ENCODE measurements at regions of chr11 and their contacts with region 1.

Region 1: DNA sequence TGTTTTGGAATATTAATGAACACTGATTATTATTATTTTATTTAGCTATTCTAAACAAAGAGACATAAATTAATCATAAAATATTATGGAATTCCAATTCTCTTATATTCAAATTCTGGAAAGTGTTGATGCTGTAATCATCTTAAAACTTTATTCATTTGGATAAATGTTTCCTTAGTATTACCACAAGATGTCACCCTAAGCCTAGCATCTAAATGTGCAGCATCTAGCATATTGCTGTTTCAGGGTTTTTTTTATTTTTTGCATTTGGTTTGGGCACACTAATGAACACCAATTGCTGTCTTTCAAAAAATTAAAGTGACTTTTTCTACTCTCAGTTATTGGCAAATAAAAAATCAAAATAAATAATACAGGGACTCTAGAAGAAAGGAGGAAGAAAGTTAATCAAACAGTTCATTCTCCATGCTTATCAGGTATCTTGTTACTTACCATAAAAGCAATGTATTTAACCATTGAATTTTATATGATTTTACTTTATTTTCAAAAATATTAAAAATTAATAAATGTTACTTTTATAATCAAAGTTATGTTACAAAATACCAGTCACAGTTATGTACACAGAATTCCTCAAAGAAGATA is 31.8 kb downstream of the DLG2 start:
- DNase-seq: peak; percentile 54
- ATAC-seq: no peak
- H3K4me3 ChIP-seq: no peak overlapping the region
- H3K4me3 Mint-ChIP-seq: no peak overlapping the region
- H3K27ac ChIP-seq: no peak overlapping the region
- H3K27ac Mint-ChIP-seq: no peak overlapping the region
- H3K4me1 ChIP-seq: no peaks in the 10 kb centered on the region
- H3K4me1 Mint-ChIP-seq: no peaks in the 10 kb centered on the region
- H3K27me3 ChIP-seq: no peaks in the 10 kb centered on the region
- H3K27me3 Mint-ChIP-seq: no peaks in the 10 kb centered on the region
- CTCF ChIP-seq: peak; percentile 78

Region 2: DNA sequence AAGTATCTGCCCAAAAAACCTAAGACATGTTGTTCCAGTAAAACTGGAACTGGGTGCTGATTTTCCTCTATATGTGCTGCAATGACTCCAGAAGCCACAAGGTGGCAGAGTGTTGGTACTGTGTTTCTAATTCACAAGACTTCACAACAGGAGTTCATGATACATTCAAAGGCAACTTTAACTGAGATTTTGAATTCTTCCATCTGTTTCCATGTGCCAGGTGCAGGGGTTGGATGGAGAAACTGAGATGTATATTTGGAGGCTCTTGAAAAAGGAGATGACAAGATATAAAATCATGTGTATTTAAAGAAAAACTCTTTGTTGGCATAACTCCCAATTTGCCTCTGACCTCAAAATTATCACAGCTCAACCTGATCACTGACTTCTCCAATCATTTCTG is 1210.7 kb before region 1 on chr11:
- CTCF ChIA-PET with region 1: interaction called, 8 read pairs
- POLR2A ChIA-PET with region 1: no interaction called
- intact Hi-C with region 1: loop called (anchors 2 kb)
- DNase-seq: peak; percentile 43
- ATAC-seq: peak; percentile 61
- H3K4me3 ChIP-seq: no peak overlapping the region
- H3K4me3 Mint-ChIP-seq: no peak overlapping the region
- H3K27ac ChIP-seq: no peak overlapping the region
- H3K27ac Mint-ChIP-seq: no peak overlapping the region
- H3K4me1 ChIP-seq: no peaks in the 10 kb centered on the region
- H3K4me1 Mint-ChIP-seq: no peaks in the 10 kb centered on the region
- H3K27me3 ChIP-seq: no peaks in the 10 kb centered on the region
- H3K27me3 Mint-ChIP-seq: peaks cover 3% of the 10 kb centered on the region
- CTCF ChIP-seq: peak; percentile 95

Region 3: GRCh38 chr11:84780689-84781293 is 814.6 kb before region 1 on chr11:
- CTCF ChIA-PET with region 1: interaction called, 30 read pairs
- POLR2A ChIA-PET with region 1: no interaction called
- intact Hi-C with region 1: loop called (anchors 1 kb)
- DNase-seq: peak; percentile 32
- ATAC-seq: no peak
- H3K4me3 ChIP-seq: no peak overlapping the region
- H3K4me3 Mint-ChIP-seq: no peak overlapping the region
- H3K27ac ChIP-seq: no peak overlapping the region
- H3K27ac Mint-ChIP-seq: no peak overlapping the region
- H3K4me1 ChIP-seq: no peaks in the 10 kb centered on the region
- H3K4me1 Mint-ChIP-seq: no peaks in the 10 kb centered on the region
- H3K27me3 ChIP-seq: no peaks in the 10 kb centered on the region
- H3K27me3 Mint-ChIP-seq: no peaks in the 10 kb centered on the region
- CTCF ChIP-seq: peak; percentile 29

Region 4: GRCh38 chr11:85826116-85826855 is 230.9 kb after region 1 on chr11:
- CTCF ChIA-PET with region 1: no interaction called
- POLR2A ChIA-PET with region 1: no interaction called
- intact Hi-C with region 1: loop called (anchors 1 kb)
- DNase-seq: no peak
- ATAC-seq: no peak
- H3K4me3 ChIP-seq: no peak overlapping the region
- H3K4me3 Mint-ChIP-seq: no peak overlapping the region
- H3K27ac ChIP-seq: no peak overlapping the region
- H3K27ac Mint-ChIP-seq: no peak overlapping the region
- H3K4me1 ChIP-seq: no peaks in the 10 kb centered on the region
- H3K4me1 Mint-ChIP-seq: no peaks in the 10 kb centered on the region
- H3K27me3 ChIP-seq: no peaks in the 10 kb centered on the region
- H3K27me3 Mint-ChIP-seq: no peaks in the 10 kb centered on the region
- CTCF ChIP-seq: no peak

Region 5: DNA sequence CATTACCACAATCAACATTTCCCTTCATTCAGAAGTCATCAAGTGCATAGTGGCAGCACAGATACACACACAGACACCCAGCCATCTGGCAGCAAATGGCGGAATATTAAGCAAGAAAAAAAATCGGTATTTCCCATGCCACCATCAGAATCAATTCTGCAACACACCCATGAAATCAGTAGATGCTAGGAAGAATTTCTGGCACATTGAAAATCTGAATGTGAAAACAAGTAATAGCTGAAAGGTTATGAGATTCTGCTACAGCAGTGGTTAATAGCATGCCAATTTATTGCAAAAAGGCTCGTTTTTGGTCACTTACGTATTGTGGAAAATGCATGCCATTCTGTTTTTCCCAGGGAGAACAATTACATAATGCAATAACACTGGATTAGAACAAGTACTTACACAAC is 382.4 kb after region 1 on chr11:
- CTCF ChIA-PET with region 1: no interaction called
- POLR2A ChIA-PET with region 1: no interaction called
- intact Hi-C with region 1: loop called (anchors 10 kb)
- DNase-seq: no peak
- ATAC-seq: no peak
- H3K4me3 ChIP-seq: no peak overlapping the region
- H3K4me3 Mint-ChIP-seq: no peak overlapping the region
- H3K27ac ChIP-seq: no peak overlapping the region
- H3K27ac Mint-ChIP-seq: no peak overlapping the region
- H3K4me1 ChIP-seq: no peaks in the 10 kb centered on the region
- H3K4me1 Mint-ChIP-seq: no peaks in the 10 kb centered on the region
- H3K27me3 ChIP-seq: no peaks in the 10 kb centered on the region
- H3K27me3 Mint-ChIP-seq: no peaks in the 10 kb centered on the region
- CTCF ChIP-seq: no peak

Region 6: GRCh38 chr11:86162239-86162638 is 566.9 kb after region 1 on chr11:
- CTCF ChIA-PET with region 1: no interaction called
- POLR2A ChIA-PET with region 1: no interaction called
- intact Hi-C with region 1: no loop called
- DNase-seq: no peak
- ATAC-seq: no peak
- H3K4me3 ChIP-seq: no peak overlapping the region
- H3K4me3 Mint-ChIP-seq: no peak overlapping the region
- H3K27ac ChIP-seq: no peak overlapping the region
- H3K27ac Mint-ChIP-seq: no peak overlapping the region
- H3K4me1 ChIP-seq: peaks cover 7 to 14% of the 10 kb centered on the region in 2 donors
- H3K4me1 Mint-ChIP-seq: peaks cover 19% of the 10 kb centered on the region
- H3K27me3 ChIP-seq: no peaks in the 10 kb centered on the region
- H3K27me3 Mint-ChIP-seq: no peaks in the 10 kb centered on the region
- CTCF ChIP-seq: no peak

Region 7: DNA sequence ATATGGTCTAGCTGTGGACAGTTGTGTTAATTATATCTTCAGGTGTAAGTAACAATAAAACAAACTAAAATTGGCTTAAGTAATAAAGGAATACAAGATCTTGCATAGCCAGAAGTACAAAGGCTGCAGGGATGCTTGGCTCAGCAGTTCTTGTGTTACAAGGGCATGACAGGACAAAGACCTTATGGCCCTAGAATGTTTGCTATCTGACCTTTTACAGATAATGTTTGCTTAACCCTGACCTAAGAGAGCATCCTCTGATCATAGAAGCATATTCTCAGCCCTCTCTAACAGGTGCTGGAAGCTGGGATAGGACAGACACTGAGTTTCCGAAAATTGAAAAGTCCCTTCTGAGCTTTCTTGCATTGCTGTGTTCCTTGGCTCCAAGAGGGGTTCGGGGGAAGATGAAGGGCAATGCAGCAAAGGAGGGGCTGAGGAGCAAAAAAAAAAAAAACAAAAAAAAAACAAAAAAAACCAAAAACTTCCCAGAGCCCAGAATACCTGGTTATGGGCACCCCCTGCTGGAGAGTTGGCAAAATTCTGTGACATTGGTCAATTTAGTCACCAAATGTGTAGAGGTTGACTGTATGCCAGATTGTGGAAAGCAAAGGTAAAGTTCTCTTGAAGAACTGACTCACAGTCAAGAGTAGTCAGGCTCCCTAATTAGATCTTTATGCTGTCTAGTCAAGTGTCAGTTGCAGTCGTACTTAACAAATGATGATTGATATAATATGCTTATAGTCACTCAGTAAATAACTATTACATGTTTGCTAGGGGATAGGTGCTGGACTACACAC is 696.3 kb after region 1 on chr11:
- CTCF ChIA-PET with region 1: interaction called, 4 read pairs
- POLR2A ChIA-PET with region 1: no interaction called
- intact Hi-C with region 1: loop called (anchors 1 kb)
- DNase-seq: peak; percentile 71
- ATAC-seq: peak; percentile 62
- H3K4me3 ChIP-seq: no peak overlapping the region
- H3K4me3 Mint-ChIP-seq: no peak overlapping the region
- H3K27ac ChIP-seq: no peak overlapping the region
- H3K27ac Mint-ChIP-seq: no peak overlapping the region
- H3K4me1 ChIP-seq: peaks cover 16 to 26% of the 10 kb centered on the region in 2 donors
- H3K4me1 Mint-ChIP-seq: peaks cover 26% of the 10 kb centered on the region
- H3K27me3 ChIP-seq: no peaks in the 10 kb centered on the region
- H3K27me3 Mint-ChIP-seq: no peaks in the 10 kb centered on the region
- CTCF ChIP-seq: peak; percentile 86

Region 8: DNA sequence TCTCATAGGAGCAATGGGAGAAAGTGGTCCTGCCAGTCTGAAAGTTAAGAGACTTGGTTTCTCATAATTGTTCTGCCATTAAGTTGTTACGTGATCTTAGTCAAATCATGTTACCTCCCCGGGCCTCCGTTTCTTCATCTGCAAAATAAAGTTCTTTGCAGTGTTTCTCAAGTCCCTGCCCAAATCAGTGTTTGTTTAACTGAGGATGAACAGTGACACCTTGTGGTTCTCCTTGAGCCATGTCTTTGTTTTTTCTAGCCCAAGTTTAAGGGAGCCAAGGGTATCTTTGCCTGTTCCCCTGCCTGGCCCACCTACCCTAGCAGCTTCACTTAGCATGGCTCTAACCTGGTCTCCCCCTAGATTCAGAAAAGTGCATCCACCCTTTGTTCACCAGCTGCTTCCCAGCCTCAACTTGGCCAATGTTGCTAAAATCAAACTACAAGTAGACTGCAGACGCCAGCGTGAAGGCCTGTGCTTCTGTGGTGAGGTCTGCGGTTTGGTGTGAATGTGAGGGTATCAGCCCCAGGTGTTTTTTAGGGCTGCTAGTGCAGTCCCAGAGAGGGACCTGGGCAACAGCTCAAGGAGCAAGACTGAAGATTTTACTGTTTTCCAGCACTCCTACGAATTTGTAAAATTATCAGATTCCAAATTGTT is 1324.3 kb after region 1 on chr11:
- CTCF ChIA-PET with region 1: no interaction called
- POLR2A ChIA-PET with region 1: no interaction called
- intact Hi-C with region 1: loop called (anchors 5 kb)
- DNase-seq: peak; percentile 13
- ATAC-seq: no peak
- H3K4me3 ChIP-seq: no peak overlapping the region
- H3K4me3 Mint-ChIP-seq: no peak overlapping the region
- H3K27ac ChIP-seq: no peak overlapping the region
- H3K27ac Mint-ChIP-seq: no peak overlapping the region
- H3K4me1 ChIP-seq: no peaks in the 10 kb centered on the region
- H3K4me1 Mint-ChIP-seq: no peaks in the 10 kb centered on the region
- H3K27me3 ChIP-seq: no peaks in the 10 kb centered on the region
- H3K27me3 Mint-ChIP-seq: peaks cover 7% of the 10 kb centered on the region
- CTCF ChIP-seq: peak; percentile 37

Measured in B cell (primary cell).